ENCODE measurements at regions of chrX and their contacts with region 1.

Region 1: DNA sequence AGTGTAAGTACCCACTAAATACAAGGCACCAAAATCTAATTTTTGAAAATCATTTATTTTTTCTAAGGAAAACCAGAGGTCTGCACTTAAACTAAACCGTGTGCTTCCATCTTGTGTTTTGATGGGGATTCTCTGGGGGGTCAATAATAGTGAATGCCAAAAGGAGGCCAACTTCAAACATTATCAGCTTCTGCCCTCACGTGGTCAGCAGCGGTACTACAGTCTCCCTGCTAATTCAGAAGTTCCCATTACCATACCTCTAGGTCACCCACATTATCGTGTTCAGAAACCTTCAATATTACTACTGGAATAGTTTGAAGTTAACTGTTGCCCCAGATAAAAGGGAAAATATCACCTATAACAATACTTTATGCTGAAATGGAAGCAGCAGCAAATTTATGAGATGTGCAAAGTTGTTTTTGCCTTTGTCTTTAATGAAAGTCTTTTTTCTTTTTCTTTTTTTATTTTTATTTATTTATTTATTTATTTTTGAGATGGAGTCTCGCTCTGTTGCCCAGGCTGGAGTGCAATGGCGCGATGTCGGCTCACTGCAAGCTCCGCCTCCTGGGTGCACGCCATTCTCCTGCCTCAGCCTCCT is 17.3 kb downstream of the CTPS2 start:
- DNase-seq: peak; percentile 35
- ATAC-seq: peak; percentile 69
- H3K4me3 Mint-ChIP-seq: no peak overlapping the region
- H3K27ac Mint-ChIP-seq: no peak overlapping the region
- H3K4me1 Mint-ChIP-seq: no peaks in the 10 kb centered on the region
- H3K27me3 Mint-ChIP-seq: no peaks in the 10 kb centered on the region
- CTCF ChIP-seq: no peak

Region 2: GRCh38 chrX:15493118-15493962 is 1201.8 kb before region 1 on chrX and contains the start of gene PIR:
- CTCF ChIA-PET with region 1: interaction called, 3 read pairs
- POLR2A ChIA-PET with region 1: no interaction called
- intact Hi-C with region 1: loop called (anchors 2 kb)
- DNase-seq: peak; percentile 19
- ATAC-seq: peak; percentile 84
- H3K4me3 Mint-ChIP-seq: peak within 1 kb of the TSS; percentile 83
- H3K27ac Mint-ChIP-seq: peak within 1 kb of the TSS; percentile 25
- H3K4me1 Mint-ChIP-seq: peaks cover 8% of the 10 kb centered on the region
- H3K27me3 Mint-ChIP-seq: peaks cover 5% of the 10 kb centered on the region
- CTCF ChIP-seq: no peak
- total RNA-seq, gene PIR: 0.82 and 1.7 TPM in 2 replicates

Region 3: GRCh38 chrX:15686818-15687685 is 1008.1 kb before region 1 on chrX:
- CTCF ChIA-PET with region 1: no interaction called
- POLR2A ChIA-PET with region 1: no interaction called
- intact Hi-C with region 1: loop called (anchors 1 kb)
- DNase-seq: no peak
- ATAC-seq: peak; percentile 89
- H3K4me3 Mint-ChIP-seq: no peak overlapping the region
- H3K27ac Mint-ChIP-seq: no peak overlapping the region
- H3K4me1 Mint-ChIP-seq: peaks cover 3% of the 10 kb centered on the region
- H3K27me3 Mint-ChIP-seq: no peaks in the 10 kb centered on the region
- CTCF ChIP-seq: no peak

Region 4: DNA sequence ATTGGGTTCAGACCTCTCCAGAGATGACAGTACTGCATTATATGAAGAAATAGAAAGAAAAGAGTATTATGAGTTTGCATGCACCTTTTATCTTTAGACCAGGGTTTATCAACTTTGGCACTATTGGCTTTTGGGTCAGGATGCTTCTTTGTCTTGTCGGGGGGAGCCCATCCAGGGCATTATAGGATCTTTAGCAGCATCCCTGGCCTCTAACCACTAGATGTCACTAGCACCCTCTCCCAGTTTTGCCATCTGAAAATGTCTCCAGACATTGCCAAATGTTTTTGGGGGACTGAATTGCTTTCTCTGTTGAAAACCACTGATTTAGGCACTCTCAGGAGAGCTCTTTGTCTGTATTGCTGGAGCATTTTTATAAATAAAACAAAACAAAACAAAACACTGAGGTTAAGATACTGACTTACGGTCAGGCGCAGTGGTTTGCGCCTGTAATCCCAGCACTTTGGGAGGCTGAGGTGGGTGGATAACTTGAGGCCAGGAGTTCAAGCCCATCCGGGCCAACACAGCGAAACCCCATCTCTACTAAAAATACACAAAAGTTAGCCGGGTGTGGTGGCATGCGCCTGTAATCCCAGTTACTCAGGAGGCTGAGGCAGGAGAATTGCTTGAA is 933.5 kb before region 1 on chrX:
- CTCF ChIA-PET with region 1: interaction called, 4 read pairs
- POLR2A ChIA-PET with region 1: no interaction called
- intact Hi-C with region 1: loop called (anchors 2 kb)
- DNase-seq: no peak
- ATAC-seq: peak; percentile 37
- H3K4me3 Mint-ChIP-seq: no peak overlapping the region
- H3K27ac Mint-ChIP-seq: peak overlapping the region; percentile 50
- H3K4me1 Mint-ChIP-seq: peaks cover 10% of the 10 kb centered on the region
- H3K27me3 Mint-ChIP-seq: no peaks in the 10 kb centered on the region
- CTCF ChIP-seq: no peak

Region 5: DNA sequence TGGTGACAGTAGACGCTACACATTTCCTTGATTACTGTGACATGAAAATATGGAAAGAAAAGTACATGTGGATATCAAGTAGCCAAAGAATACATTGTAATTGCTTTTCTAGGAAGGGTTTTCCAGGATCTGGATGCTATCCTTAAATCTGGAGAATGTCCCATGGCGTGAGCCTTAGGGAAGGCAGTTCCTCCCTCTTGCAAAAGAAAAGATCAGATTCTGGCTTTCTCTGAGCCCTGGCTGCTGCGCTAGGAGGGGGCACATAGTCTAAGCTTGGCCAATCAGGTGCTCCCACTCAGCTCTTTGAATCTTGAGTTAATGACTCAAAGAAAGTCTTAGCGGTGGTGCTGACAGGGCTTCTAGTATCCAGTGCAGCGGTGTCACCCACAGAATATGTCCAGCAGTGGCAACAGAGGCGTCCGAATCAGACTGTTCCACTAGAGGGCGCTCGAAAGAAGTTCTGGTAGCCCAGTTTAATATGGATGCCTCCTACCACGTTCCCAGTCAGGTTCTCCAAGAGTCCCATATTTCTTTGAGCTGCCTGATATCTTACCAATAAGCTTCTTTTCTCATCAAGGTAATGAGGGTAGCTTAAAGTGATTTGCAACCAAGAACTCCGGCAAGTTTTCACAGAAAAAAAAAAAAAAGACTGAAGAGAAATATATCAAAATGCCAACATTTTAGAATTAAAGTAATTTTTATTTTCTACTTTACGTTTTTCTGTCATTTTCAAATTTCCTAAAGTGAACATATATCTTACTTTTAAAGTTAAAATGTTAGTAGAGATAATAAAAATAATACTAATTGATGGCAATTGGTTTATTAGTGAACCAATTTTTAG is 258.6 kb before region 1 on chrX:
- CTCF ChIA-PET with region 1: no interaction called
- POLR2A ChIA-PET with region 1: no interaction called
- intact Hi-C with region 1: loop called (anchors 2 kb)
- DNase-seq: peak; percentile 15
- ATAC-seq: peak; percentile 25
- H3K4me3 Mint-ChIP-seq: no peak overlapping the region
- H3K27ac Mint-ChIP-seq: no peak overlapping the region
- H3K4me1 Mint-ChIP-seq: no peaks in the 10 kb centered on the region
- H3K27me3 Mint-ChIP-seq: peaks cover 6% of the 10 kb centered on the region
- CTCF ChIP-seq: no peak

Measured in activated B cell treated with CpG ODN at 0.5 μM for 24 hours (primary cell).